Activated CD8-positive, alpha-beta T cell treated with anti-CD3 and anti-CD28 coated beads, Interleukin-2, amount 10 ng/mL, durations not matched to agents 7 days and 5 days (primary cell): ENCODE measurements at regions of chr5 and their contacts with region 1.

Region 1: GRCh38 chr5:59126708-59127573 is 544.1 kb downstream of the RAB3C start:
- DNase-seq: no peak
- ATAC-seq: peak; percentile 35
- H3K4me3 Mint-ChIP-seq: no peak overlapping the region
- H3K27ac Mint-ChIP-seq: no peak overlapping the region
- H3K4me1 Mint-ChIP-seq: peaks cover 19% of the 10 kb centered on the region
- H3K27me3 Mint-ChIP-seq: no peaks in the 10 kb centered on the region

Region 2: GRCh38 chr5:59099270-59099994 is 27.5 kb before region 1 on chr5:
- CTCF ChIA-PET with region 1: interaction called, 48 read pairs
- POLR2A ChIA-PET with region 1: interaction called, 21 read pairs
- DNase-seq: peak; percentile 75
- ATAC-seq: peak; percentile 97
- H3K4me3 Mint-ChIP-seq: peak overlapping the region; percentile 42
- H3K27ac Mint-ChIP-seq: peak overlapping the region; percentile 83
- H3K4me1 Mint-ChIP-seq: peaks cover 69% of the 10 kb centered on the region
- H3K27me3 Mint-ChIP-seq: no peaks in the 10 kb centered on the region

Region 3: GRCh38 chr5:59104400-59105127 is 22.4 kb before region 1 on chr5:
- CTCF ChIA-PET with region 1: interaction called, 48 read pairs
- POLR2A ChIA-PET with region 1: interaction called, 21 read pairs
- DNase-seq: no peak
- ATAC-seq: no peak
- H3K4me3 Mint-ChIP-seq: no peak overlapping the region
- H3K27ac Mint-ChIP-seq: no peak overlapping the region
- H3K4me1 Mint-ChIP-seq: peaks cover 45% of the 10 kb centered on the region
- H3K27me3 Mint-ChIP-seq: no peaks in the 10 kb centered on the region

Region 4: GRCh38 chr5:59152701-59153245 is 25.8 kb after region 1 on chr5:
- CTCF ChIA-PET with region 1: interaction called, 22 read pairs
- POLR2A ChIA-PET with region 1: interaction called, 4 read pairs
- DNase-seq: no peak
- ATAC-seq: peak; percentile 66
- H3K4me3 Mint-ChIP-seq: peak overlapping the region; percentile 44
- H3K27ac Mint-ChIP-seq: no peak overlapping the region
- H3K4me1 Mint-ChIP-seq: peaks cover 9% of the 10 kb centered on the region
- H3K27me3 Mint-ChIP-seq: no peaks in the 10 kb centered on the region

Region 5: GRCh38 chr5:59358005-59358861 is 231.3 kb after region 1 on chr5:
- CTCF ChIA-PET with region 1: no interaction called
- POLR2A ChIA-PET with region 1: no interaction called
- DNase-seq: no peak
- ATAC-seq: no peak
- H3K4me3 Mint-ChIP-seq: no peak overlapping the region
- H3K27ac Mint-ChIP-seq: no peak overlapping the region
- H3K4me1 Mint-ChIP-seq: no peaks in the 10 kb centered on the region
- H3K27me3 Mint-ChIP-seq: peaks cover 19% of the 10 kb centered on the region